ENCODE measurements at regions of chr13 and their contacts with region 1.

Region 1: GRCh38 chr13:72839831-72840426 is 58.0 kb downstream of the PIBF1 start:
- DNase-seq: peak; percentile 28
- H3K4me3 ChIP-seq: no peak overlapping the region
- CTCF ChIP-seq: peak; percentile 72

Region 2: DNA sequence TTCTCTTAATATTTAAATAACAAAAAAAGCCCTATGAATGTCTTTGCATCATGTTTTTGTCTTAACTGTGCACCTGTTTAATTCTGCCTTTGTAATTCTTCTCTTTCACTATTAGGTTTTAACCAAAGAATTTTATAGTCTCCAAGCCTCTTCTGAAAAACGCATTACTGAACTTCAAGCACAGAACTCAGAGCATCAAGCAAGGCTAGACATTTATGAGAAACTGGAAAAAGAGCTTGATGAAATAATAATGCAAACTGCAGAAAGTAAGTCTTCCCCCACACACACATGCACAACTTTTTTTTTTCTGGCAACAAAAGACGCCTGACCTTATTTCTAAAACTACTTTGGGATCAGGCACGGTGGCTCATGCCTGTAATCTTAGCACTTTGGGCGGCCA is 68.5 kb after region 1 on chr13:
- in situ Hi-C with region 1: no loop called
- DNase-seq: no peak
- H3K4me3 ChIP-seq: no peak overlapping the region
- CTCF ChIP-seq: no peak

Region 3: GRCh38 chr13:73708393-73708985 is 868.6 kb after region 1 on chr13:
- in situ Hi-C with region 1: loop called (anchors 25 kb)
- DNase-seq: peak; percentile 70
- H3K4me3 ChIP-seq: no peak overlapping the region
- CTCF ChIP-seq: peak; percentile 86